ENCODE measurements at regions of chr12 and their contacts with region 1.

Region 1: GRCh38 chr12:101414533-101415119 is 7.1 kb upstream of the ARL1 start:
- DNase-seq: no peak
- H3K4me3 Mint-ChIP-seq: no peak overlapping the region
- H3K27ac Mint-ChIP-seq: no peak overlapping the region
- H3K4me1 Mint-ChIP-seq: no peaks in the 10 kb centered on the region
- H3K27me3 Mint-ChIP-seq: no peaks in the 10 kb centered on the region

Region 2: GRCh38 chr12:101430456-101430855 is 15.8 kb after region 1 on chr12:
- CTCF ChIA-PET with region 1: no interaction called
- POLR2A ChIA-PET with region 1: no interaction called
- intact Hi-C with region 1: no loop called
- DNase-seq: no peak
- H3K4me3 Mint-ChIP-seq: no peak overlapping the region
- H3K27ac Mint-ChIP-seq: no peak overlapping the region
- H3K4me1 Mint-ChIP-seq: no peaks in the 10 kb centered on the region
- H3K27me3 Mint-ChIP-seq: peaks cover 2% of the 10 kb centered on the region

Region 3: DNA sequence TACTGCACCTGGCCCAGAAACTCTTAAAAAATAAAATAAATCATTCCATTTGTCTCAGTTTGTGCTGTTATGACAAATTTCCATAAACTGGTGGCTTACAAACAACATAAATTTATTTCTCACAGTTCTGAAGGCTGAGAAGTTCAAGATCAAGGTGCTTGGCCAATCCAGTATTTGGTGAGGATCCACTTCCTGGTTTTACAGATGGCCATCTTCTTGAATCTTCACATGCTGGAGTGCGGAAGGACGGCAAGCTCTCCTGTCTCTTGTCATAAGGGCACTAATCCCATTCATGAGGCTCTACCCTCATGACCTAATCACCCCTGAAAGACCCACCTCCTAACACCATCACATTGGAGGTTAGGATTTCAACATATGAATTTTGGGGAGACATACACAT is 150.3 kb after region 1 on chr12:
- CTCF ChIA-PET with region 1: no interaction called
- POLR2A ChIA-PET with region 1: no interaction called
- intact Hi-C with region 1: loop called (anchors 10 kb)
- DNase-seq: no peak
- H3K4me3 Mint-ChIP-seq: no peak overlapping the region
- H3K27ac Mint-ChIP-seq: no peak overlapping the region
- H3K4me1 Mint-ChIP-seq: peaks cover 4% of the 10 kb centered on the region
- H3K27me3 Mint-ChIP-seq: peaks cover 10% of the 10 kb centered on the region